ENCODE measurements at regions of chr12 and their contacts with region 1.

Region 1: GRCh38 chr12:123232807-123233543 is at the starts of genes MPHOSPH9 and MTRFR:
- DNase-seq: peak; percentile 96 to 100 (median 99)
- ATAC-seq: peak; percentile 86 to 90
- H3K4me3 Mint-ChIP-seq: peak within 1 kb of the TSS; percentile 96 to 100 (median 99)
- H3K27ac Mint-ChIP-seq: peak within 1 kb of the TSS; percentile 98 to 100 (median 99)
- H3K4me1 Mint-ChIP-seq: peaks cover 22 to 86% (median 71%) of the 10 kb centered on the region in 4 donors
- H3K27me3 Mint-ChIP-seq: peaks cover 0 to 2% (median 0%) of the 10 kb centered on the region in 5 donors
- polyA plus RNA-seq, gene MPHOSPH9: 33.9 to 53.4 (median 44.8) TPM
- polyA plus RNA-seq, gene MTRFR: 45.2 to 63.6 (median 56.5) TPM

Region 2: DNA sequence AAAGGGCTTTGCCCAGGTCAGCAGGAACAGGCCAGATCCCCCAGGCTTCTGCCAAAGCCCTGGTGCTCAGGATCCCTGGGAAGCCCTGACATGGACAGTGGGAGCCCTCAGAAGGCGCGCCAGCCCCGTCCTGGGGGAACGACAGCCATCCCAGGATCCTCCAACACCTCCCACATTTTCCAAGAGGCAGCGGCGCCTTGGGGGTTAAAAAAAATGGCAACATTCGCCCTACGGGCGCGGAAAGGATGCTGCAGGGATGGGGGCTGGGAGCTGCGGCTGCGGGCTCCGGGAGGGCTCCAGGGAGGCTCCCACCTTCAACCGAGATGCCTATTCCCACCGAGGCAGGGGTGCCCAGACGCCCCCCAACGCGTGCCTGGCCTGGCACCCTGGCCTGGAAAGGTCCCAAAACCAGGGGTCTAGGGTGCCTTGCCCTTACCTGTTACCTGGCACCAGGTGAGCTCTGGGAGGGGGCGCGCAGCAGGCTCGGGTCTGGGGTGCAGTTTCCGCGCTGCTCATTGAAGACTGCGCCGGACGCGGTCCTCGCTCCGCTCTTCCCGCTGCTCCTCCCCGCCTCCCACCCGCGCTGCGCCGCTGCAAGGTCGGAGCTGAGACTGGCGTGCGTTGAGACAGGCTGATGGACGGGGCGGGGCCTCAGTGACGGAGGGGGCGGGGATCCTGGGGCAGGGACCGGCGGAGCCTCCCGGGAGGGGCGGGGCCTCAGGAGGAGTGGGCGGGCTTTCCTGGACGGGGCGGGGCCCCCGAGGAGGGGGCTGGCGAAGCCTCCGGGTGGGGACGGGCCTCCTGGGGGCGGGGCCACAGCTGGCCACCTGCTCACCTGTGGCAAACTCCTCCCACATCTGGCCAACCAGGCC is 266.9 kb before region 1 on chr12 and contains the start of gene ABCB9:
- POLR2A ChIA-PET with region 1: interaction called, 20 read pairs
- DNase-seq: peak; percentile 79 to 97 (median 89)
- ATAC-seq: peak; percentile 95 to 96
- H3K4me3 Mint-ChIP-seq: peak within 1 kb of the TSS; percentile 63 to 85 (median 74)
- H3K27ac Mint-ChIP-seq: peak within 1 kb of the TSS in 9 of 10 donors; percentile 31 to 91 (median 73)
- H3K4me1 Mint-ChIP-seq: peaks cover 6 to 14% (median 8%) of the 10 kb centered on the region in 4 donors
- H3K27me3 Mint-ChIP-seq: no peaks in the 10 kb centered on the region
- polyA plus RNA-seq, gene ABCB9: 0.45 to 1.4 (median 0.80) TPM

Region 3: GRCh38 chr12:123043536-123044001 is 189.4 kb before region 1 on chr12:
- POLR2A ChIA-PET with region 1: interaction called, 53 read pairs
- DNase-seq: peak; percentile 42 to 89 (median 70)
- ATAC-seq: peak; percentile 98 to 99
- H3K4me3 Mint-ChIP-seq: peak overlapping the region in 9 of 10 donors; percentile 11 to 77 (median 65)
- H3K27ac Mint-ChIP-seq: peak overlapping the region; percentile 88 to 99 (median 94)
- H3K4me1 Mint-ChIP-seq: peaks cover 29 to 50% (median 47%) of the 10 kb centered on the region in 4 donors
- H3K27me3 Mint-ChIP-seq: no peaks in the 10 kb centered on the region

Region 4: GRCh38 chr12:123115409-123116121 is 117.4 kb before region 1 on chr12:
- POLR2A ChIA-PET with region 1: interaction called, 32 read pairs
- DNase-seq: peak in 5 of 10 donors; percentile 22 to 75 (median 63)
- ATAC-seq: peak; percentile 85 to 87
- H3K4me3 Mint-ChIP-seq: peak overlapping the region in 9 of 10 donors; percentile 40 to 64 (median 54)
- H3K27ac Mint-ChIP-seq: peak overlapping the region; percentile 89 to 97 (median 94)
- H3K4me1 Mint-ChIP-seq: peaks cover 34 to 93% (median 78%) of the 10 kb centered on the region in 4 donors
- H3K27me3 Mint-ChIP-seq: no peaks in the 10 kb centered on the region

Region 5: GRCh38 chr12:123187637-123188036 is 45.3 kb before region 1 on chr12:
- POLR2A ChIA-PET with region 1: interaction called, 10 read pairs
- DNase-seq: no peak
- ATAC-seq: no peak
- H3K4me3 Mint-ChIP-seq: no peak overlapping the region
- H3K27ac Mint-ChIP-seq: peak overlapping the region in 3 of 10 donors; percentile 3 to 46 (median 44)
- H3K4me1 Mint-ChIP-seq: peaks cover 0 to 8% (median 1%) of the 10 kb centered on the region in 4 donors
- H3K27me3 Mint-ChIP-seq: no peaks in the 10 kb centered on the region

Region 6: GRCh38 chr12:123271001-123271729 is 38.2 kb after region 1 on chr12:
- POLR2A ChIA-PET with region 1: interaction called, 24 read pairs
- DNase-seq: peak; percentile 55 to 84 (median 72)
- ATAC-seq: peak; percentile 72 to 79
- H3K4me3 Mint-ChIP-seq: no peak overlapping the region
- H3K27ac Mint-ChIP-seq: no peak overlapping the region
- H3K4me1 Mint-ChIP-seq: peaks cover 9 to 35% (median 30%) of the 10 kb centered on the region in 4 donors
- H3K27me3 Mint-ChIP-seq: no peaks in the 10 kb centered on the region

Region 7: GRCh38 chr12:123337070-123337469 is 104.1 kb after region 1 on chr12:
- POLR2A ChIA-PET with region 1: no interaction called
- DNase-seq: no peak
- ATAC-seq: no peak
- H3K4me3 Mint-ChIP-seq: no peak overlapping the region
- H3K27ac Mint-ChIP-seq: peak overlapping the region in 2 of 10 donors; percentile 12 to 74
- H3K4me1 Mint-ChIP-seq: peaks cover 4 to 23% (median 11%) of the 10 kb centered on the region in 4 donors
- H3K27me3 Mint-ChIP-seq: no peaks in the 10 kb centered on the region

Measured in naive thymus-derived CD8-positive, alpha-beta T cell (primary cell).